ENCODE measurements at regions of chr6 and their contacts with region 1.

Region 1: GRCh38 chr6:99467509-99468106 is 42.5 kb upstream of the PNISR start:
- DNase-seq: no peak
- ATAC-seq: no peak
- H3K4me3 ChIP-seq: no peak overlapping the region
- H3K27ac ChIP-seq: no peak overlapping the region
- H3K4me1 ChIP-seq: no peaks in the 10 kb centered on the region
- H3K27me3 ChIP-seq: no peaks in the 10 kb centered on the region
- CTCF ChIP-seq: peak; percentile 60 to 64 (median 61)
- POLR2A ChIP-seq: no peak
- RAD21 ChIP-seq: peak; percentile 75

Region 2: DNA sequence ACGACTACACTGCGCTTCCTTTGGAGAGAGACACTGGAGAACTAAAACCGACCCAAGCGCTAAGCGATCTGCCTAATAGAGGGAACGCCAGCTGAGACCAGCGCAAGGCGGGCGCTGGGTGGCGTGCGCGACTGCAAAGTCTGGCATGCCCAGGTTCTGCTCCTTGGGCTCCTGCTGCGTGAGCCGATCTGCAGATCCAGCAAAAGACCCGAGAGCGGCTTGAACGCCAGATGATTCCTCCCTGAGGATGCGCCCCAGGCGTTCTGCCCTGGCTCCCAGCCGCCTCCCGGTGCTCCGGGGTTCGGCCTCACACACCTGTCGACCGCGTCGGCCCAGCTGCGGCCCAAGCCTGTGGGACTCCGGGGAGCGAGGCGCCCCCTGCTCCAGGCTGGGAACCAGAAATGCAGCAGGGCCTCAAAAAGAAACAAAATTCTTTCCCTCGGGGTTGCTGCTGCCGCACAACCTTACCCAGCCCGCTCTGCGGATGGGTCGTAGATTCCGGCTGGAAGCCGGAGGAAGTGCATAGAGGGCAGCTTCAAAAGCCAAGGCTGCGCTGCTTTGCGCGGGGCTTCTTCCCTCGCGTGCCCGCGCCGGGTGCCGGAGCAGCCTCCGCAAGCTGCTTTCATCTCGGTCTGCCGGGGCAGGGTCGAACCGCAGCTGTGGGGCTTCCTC is 121.1 kb after region 1 on chr6:
- CTCF ChIA-PET with region 1: no interaction called
- POLR2A ChIA-PET with region 1: no interaction called
- RAD21 ChIA-PET with region 1: no interaction called
- intact Hi-C with region 1: no loop called
- DNase-seq: no peak
- ATAC-seq: no peak
- H3K4me3 ChIP-seq: no peak overlapping the region
- H3K27ac ChIP-seq: no peak overlapping the region
- H3K4me1 ChIP-seq: no peaks in the 10 kb centered on the region
- H3K27me3 ChIP-seq: no peaks in the 10 kb centered on the region; the same call in 1 of the 2 replicates
- CTCF ChIP-seq: no peak
- POLR2A ChIP-seq: no peak
- RAD21 ChIP-seq: no peak

Region 3: GRCh38 chr6:99746261-99746895 is 278.8 kb after region 1 on chr6:
- CTCF ChIA-PET with region 1: interaction called, 15 read pairs
- POLR2A ChIA-PET with region 1: no interaction called
- RAD21 ChIA-PET with region 1: no interaction called
- intact Hi-C with region 1: loop called (anchors 1 kb)
- DNase-seq: peak; percentile 76
- ATAC-seq: peak; percentile 89
- H3K4me3 ChIP-seq: no peak overlapping the region
- H3K27ac ChIP-seq: no peak overlapping the region
- H3K4me1 ChIP-seq: peaks cover 0 to 8% of the 10 kb centered on the region in 2 experiments; a peak in 2 of 4 replicates
- H3K27me3 ChIP-seq: no peaks in the 10 kb centered on the region
- CTCF ChIP-seq: peak; percentile 55 to 83 (median 69); a peak in 5 of 6 replicates
- POLR2A ChIP-seq: no peak
- RAD21 ChIP-seq: peak; percentile 81

Region 4: DNA sequence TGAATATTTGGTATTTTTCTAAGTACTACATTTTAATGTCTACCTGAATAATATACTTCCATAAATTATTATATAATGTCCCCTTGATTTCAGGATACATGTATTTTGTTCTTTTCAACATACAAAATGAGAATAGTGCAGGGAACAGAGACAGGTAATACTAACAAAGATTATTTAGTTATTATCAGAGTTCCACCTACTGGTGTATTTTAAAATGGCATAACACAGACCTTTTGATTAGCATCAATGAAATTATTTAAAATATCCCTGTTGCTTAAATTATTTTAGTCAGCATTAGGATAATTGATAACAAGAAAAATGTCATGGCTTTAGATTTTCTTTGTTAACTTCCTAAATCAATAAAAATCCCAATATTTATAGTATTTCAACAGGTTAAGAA is 323.1 kb after region 1 on chr6:
- CTCF ChIA-PET with region 1: interaction called, 3 read pairs
- POLR2A ChIA-PET with region 1: no interaction called
- RAD21 ChIA-PET with region 1: no interaction called
- intact Hi-C with region 1: loop called (anchors 10 kb)
- DNase-seq: no peak
- ATAC-seq: no peak
- H3K4me3 ChIP-seq: no peak overlapping the region
- H3K27ac ChIP-seq: no peak overlapping the region
- H3K4me1 ChIP-seq: peaks cover 0 to 4% of the 10 kb centered on the region in 2 experiments; a peak in 2 of 4 replicates
- H3K27me3 ChIP-seq: no peaks in the 10 kb centered on the region
- CTCF ChIP-seq: peak in 2 of 3 experiments; percentile 41 to 44; a peak in 2 of 6 replicates
- POLR2A ChIP-seq: no peak
- RAD21 ChIP-seq: peak; percentile 56

Region 5: GRCh38 chr6:99822741-99823512 is 355.3 kb after region 1 on chr6:
- CTCF ChIA-PET with region 1: interaction called, 15 read pairs
- POLR2A ChIA-PET with region 1: no interaction called
- RAD21 ChIA-PET with region 1: no interaction called
- intact Hi-C with region 1: loop called (anchors 5 kb)
- DNase-seq: peak; percentile 37
- ATAC-seq: peak; percentile 90
- H3K4me3 ChIP-seq: no peak overlapping the region
- H3K27ac ChIP-seq: no peak overlapping the region
- H3K4me1 ChIP-seq: no peaks in the 10 kb centered on the region
- H3K27me3 ChIP-seq: no peaks in the 10 kb centered on the region
- CTCF ChIP-seq: peak; percentile 51 to 60 (median 56)
- POLR2A ChIP-seq: no peak
- RAD21 ChIP-seq: peak; percentile 78

Region 6: DNA sequence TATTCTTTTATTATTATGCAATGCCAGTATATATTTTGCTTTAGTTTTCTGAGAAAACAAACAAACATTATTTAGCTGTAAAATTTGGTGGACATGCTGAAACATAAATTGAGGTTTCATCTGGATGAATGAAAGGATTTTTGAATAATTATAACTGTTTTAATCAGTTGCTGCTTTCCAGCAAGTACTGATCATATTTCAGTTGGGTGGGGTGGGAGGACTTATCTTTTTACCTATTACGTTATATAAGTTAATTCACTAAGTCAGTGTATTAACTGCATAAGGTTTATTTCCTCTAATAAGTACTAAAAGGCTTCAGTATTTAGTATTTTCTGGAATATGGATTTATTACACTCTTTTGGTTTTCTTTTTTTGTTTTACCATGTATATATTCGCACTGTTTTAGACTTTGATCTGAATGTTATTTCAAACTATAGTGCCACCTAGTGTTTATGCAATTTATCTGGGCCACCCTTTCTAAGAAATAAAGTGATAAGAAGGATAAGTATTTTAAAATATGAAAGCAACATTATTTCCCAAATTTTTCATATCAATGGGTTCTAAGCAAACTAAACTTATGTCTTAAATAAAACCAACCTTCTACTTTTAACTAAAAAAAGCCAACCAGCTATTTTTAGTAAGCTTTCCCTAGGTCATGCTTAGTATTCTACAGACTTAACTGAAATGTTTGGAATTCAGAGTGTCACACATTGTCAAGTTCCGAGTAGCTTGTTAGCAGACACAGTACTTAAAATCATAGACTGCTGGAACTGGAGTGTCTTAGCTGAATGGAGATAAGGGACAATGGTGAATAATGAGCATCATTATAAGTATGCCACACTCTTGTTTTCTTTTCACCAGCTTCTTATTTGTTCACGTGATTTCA is 631.8 kb after region 1 on chr6:
- CTCF ChIA-PET with region 1: no interaction called
- POLR2A ChIA-PET with region 1: no interaction called
- RAD21 ChIA-PET with region 1: no interaction called
- intact Hi-C with region 1: loop called (anchors 2 kb)
- DNase-seq: peak; percentile 16
- ATAC-seq: peak; percentile 70
- H3K4me3 ChIP-seq: no peak overlapping the region
- H3K27ac ChIP-seq: no peak overlapping the region
- H3K4me1 ChIP-seq: no peaks in the 10 kb centered on the region
- H3K27me3 ChIP-seq: no peaks in the 10 kb centered on the region
- CTCF ChIP-seq: peak; percentile 37 to 79 (median 69); a peak in 5 of 6 replicates
- POLR2A ChIP-seq: no peak
- RAD21 ChIP-seq: peak; percentile 63